Activated T-helper 2 cell treated with anti-CD3 and anti-CD28 coated beads, Interferon-gamma antibody, Interleukin-2, Interleukin-4, amounts not matched to agents 10 μg/mL and 5 μg/mL and 100 μg/mL, durations not matched to agents 14 hours and 24 hours and 36 hours (primary cell): ENCODE measurements at regions of chr9 and their contacts with region 1.

Region 1: GRCh38 chr9:91681461-91682305 is 258.1 kb upstream of the NFIL3 start:
- DNase-seq: peak; percentile 64
- H3K4me3 Mint-ChIP-seq: peak overlapping the region; percentile 55
- H3K27ac Mint-ChIP-seq: no peak overlapping the region
- H3K4me1 Mint-ChIP-seq: peaks cover 6% of the 10 kb centered on the region
- H3K27me3 Mint-ChIP-seq: peaks cover 28% of the 10 kb centered on the region

Region 2: GRCh38 chr9:90914868-90915483 is 766.7 kb before region 1 on chr9:
- intact Hi-C with region 1: loop called (anchors 1 kb)
- DNase-seq: peak; percentile 54
- H3K4me3 Mint-ChIP-seq: no peak overlapping the region
- H3K27ac Mint-ChIP-seq: peak overlapping the region; percentile 62
- H3K4me1 Mint-ChIP-seq: peaks cover 14% of the 10 kb centered on the region
- H3K27me3 Mint-ChIP-seq: no peaks in the 10 kb centered on the region

Region 3: DNA sequence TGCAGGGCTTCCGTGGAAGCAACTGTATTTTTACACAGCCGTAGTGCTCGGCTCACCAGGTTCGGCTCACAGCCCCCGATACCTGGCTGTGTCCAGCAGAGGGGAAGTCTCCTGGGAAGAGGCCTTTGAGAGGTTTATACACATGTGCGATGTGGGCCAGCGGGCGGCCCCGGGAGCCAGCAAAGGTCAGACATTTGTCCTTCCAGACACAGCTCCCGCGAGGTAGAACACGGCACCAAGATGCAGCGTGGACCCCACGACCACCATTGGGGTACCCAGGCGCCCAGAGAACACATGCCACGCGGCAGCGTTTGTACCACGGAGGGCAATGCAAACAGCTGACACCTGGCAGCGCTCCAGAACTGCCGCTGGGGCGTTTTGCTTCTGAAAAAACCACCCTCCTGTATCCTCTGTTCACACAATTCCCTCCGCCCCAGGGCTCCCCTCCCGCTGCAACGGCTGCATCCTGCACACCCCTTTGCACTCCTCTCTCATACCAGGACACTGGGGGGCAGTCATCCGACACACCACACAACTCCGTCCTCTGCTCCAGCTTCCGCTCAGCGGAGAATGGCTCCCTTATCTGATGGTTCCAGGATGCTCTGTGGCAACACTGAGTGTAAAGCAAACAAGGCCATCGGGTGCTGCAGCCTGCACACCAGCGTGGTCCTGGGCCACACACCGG is 644.7 kb before region 1 on chr9:
- intact Hi-C with region 1: loop called (anchors 10 kb)
- DNase-seq: peak; percentile 79
- H3K4me3 Mint-ChIP-seq: peak overlapping the region; percentile 49
- H3K27ac Mint-ChIP-seq: peak overlapping the region; percentile 88
- H3K4me1 Mint-ChIP-seq: peaks cover 61% of the 10 kb centered on the region
- H3K27me3 Mint-ChIP-seq: no peaks in the 10 kb centered on the region

Region 4: DNA sequence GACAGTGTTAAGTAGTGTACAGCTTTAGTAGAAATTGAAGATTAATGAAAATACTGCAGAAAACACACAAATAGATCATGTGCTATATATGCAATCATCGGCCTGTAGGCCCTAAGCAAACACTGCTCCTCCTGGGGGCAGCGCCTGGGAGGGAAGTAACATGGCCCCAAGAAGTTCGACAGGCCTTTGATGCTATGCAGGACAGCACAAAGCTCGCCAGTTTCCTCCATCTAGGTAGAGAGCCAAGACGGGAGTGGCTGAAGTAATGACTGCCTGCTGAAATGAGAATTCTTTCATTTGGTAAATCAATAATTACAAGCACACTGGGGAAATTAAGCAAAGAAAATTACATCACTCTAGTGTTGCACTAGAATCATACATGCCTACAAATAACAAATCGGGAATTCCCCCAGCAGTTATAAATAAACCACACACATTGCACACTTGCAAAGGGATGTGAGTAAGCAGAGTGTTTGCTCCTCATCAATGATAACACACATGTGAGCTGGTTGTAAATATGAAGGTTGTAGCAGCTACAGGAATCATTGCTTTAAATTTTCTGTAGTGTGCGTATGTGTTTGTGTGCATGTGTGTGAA is 38.1 kb before region 1 on chr9:
- intact Hi-C with region 1: no loop called
- DNase-seq: no peak
- H3K4me3 Mint-ChIP-seq: no peak overlapping the region
- H3K27ac Mint-ChIP-seq: no peak overlapping the region
- H3K4me1 Mint-ChIP-seq: no peaks in the 10 kb centered on the region
- H3K27me3 Mint-ChIP-seq: peaks cover 24% of the 10 kb centered on the region

Region 5: GRCh38 chr9:91693226-91693625 is 11.5 kb after region 1 on chr9:
- intact Hi-C with region 1: no loop called
- DNase-seq: no peak
- H3K4me3 Mint-ChIP-seq: no peak overlapping the region
- H3K27ac Mint-ChIP-seq: no peak overlapping the region
- H3K4me1 Mint-ChIP-seq: peaks cover 5% of the 10 kb centered on the region
- H3K27me3 Mint-ChIP-seq: peaks cover 10% of the 10 kb centered on the region

Region 6: DNA sequence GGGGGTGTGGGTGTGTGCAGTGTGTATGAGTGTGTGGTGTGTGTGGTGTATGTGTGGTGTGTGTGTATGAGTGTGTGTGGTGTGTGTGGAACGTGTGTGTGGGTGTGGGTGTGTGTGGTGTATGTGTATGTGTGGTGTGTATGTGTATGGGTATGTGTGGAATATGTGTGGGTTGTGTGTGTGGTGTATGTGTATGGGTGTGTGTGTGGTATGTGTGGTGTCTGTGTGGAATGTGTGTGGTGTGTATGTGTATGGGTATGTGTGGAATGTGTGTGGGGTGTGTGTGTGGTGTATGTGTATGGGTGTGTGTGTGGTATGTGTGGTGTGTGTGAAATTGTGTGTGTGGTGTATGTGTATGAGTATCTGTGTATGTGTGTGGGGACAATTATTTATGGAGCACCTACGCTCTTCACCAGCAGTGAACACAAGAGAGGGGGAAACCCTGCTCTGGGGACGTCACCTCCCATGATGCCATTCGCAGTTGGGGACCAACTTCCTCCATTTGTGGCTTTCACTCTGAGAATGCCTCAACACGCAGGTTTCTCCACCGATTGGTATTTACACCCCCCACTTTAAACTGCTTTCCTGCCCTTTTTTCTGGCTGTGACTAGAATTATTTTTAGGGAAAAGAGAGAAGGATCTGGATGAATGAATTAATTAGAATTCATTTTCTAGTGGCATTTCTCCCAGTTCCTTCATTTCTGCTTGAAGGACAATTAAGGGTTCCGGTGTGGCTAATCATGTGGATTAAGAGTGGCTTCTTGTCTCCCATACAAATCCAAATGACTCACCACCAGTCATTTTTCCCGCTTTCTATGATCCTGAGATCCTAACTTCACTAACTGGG is 30.3 kb after region 1 on chr9:
- intact Hi-C with region 1: loop called (anchors 5 kb)
- DNase-seq: peak; percentile 72
- H3K4me3 Mint-ChIP-seq: no peak overlapping the region
- H3K27ac Mint-ChIP-seq: no peak overlapping the region
- H3K4me1 Mint-ChIP-seq: peaks cover 18% of the 10 kb centered on the region
- H3K27me3 Mint-ChIP-seq: peaks cover 8% of the 10 kb centered on the region